AG04449 (cell line): ENCODE measurements at regions of chr4 and their contacts with region 1.

Region 1: GRCh38 chr4:99054428-99054994 is 34.1 kb downstream of the ADH5 start:
- DNase-seq: no peak
- H3K4me3 ChIP-seq: no peak overlapping the region
- CTCF ChIP-seq: no peak

Region 2: DNA sequence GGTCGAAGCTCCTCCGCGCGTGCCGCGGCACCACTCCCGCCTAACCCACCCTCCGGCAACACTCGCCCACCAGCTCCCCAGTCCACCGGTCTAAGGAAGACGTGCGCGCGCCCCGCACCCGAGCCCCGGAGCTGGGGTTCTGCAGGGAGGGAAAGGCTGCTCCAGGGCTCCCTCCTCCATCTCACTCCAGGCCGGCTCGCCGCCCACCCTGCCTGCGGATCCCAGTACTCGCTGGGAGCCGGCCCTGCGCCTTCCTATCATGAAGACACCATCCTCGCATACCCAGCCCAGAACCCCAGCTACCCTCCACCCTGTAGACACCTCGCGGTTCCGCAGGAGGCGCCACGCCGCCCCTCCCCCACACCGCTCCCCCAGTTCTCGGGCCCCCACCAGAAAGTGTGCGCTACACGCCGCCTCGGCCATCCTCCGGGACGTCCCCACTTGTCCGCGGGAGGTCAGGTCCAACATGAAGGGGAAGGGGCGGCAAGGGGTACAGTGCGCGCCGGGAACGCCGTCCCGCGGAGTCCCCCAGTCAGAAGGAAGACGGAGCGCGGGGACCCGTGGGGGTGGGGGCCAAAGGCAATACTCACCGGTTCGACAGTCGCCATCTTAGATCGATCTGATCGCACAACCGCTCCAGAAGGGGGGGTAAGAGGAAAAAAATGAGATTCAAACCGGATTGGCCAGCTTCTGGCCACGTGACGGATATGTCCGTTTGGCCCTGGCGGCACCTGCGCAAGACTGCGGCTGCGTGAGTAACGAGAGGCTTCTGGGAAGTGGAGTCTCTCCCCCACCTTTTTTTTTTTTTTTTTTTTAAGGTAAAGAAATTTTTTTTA is 125.8 kb before region 1 on chr4 and contains the start of gene EIF4E:
- CTCF ChIA-PET with region 1: interaction called, 21 read pairs
- POLR2A ChIA-PET with region 1: no interaction called
- DNase-seq: peak; percentile 96
- H3K4me3 ChIP-seq: peak within 1 kb of the TSS; percentile 94
- CTCF ChIP-seq: peak; percentile 18

Region 3: GRCh38 chr4:98945297-98945850 is 109.1 kb before region 1 on chr4:
- CTCF ChIA-PET with region 1: interaction called, 21 read pairs
- POLR2A ChIA-PET with region 1: no interaction called
- DNase-seq: no peak
- H3K4me3 ChIP-seq: no peak overlapping the region
- CTCF ChIP-seq: no peak

Region 4: GRCh38 chr4:99028187-99028586 is 26.3 kb before region 1 on chr4:
- CTCF ChIA-PET with region 1: interaction called, 21 read pairs
- POLR2A ChIA-PET with region 1: no interaction called
- DNase-seq: no peak
- H3K4me3 ChIP-seq: no peak overlapping the region
- CTCF ChIP-seq: no peak

Region 5: DNA sequence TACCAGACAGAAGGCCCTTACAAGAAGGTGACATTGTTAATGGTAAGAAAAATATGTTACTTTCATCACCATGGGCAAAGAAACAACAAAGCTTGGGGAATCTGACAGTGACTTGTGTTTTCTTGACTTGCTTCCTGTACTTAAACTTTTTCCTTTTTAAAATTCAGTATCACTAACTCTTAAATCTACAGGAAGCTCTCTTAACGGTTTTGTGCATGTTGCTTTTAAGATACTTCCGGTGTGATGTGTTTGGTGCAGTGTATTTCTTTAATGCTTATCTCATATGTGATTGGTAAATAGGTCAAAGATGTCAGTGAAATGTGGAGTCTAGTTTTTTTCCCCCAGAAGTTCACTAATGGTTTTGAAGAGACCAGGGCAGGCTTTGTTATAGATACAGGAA is 11.2 kb before region 1 on chr4:
- CTCF ChIA-PET with region 1: interaction called, 20 read pairs
- POLR2A ChIA-PET with region 1: no interaction called
- DNase-seq: no peak
- H3K4me3 ChIP-seq: no peak overlapping the region
- CTCF ChIP-seq: no peak

Region 6: GRCh38 chr4:99383833-99384392 is 329.4 kb after region 1 on chr4:
- CTCF ChIA-PET with region 1: no interaction called
- POLR2A ChIA-PET with region 1: no interaction called
- DNase-seq: peak; percentile 75
- H3K4me3 ChIP-seq: no peak overlapping the region
- CTCF ChIP-seq: no peak